GM12878 (cell line): ENCODE measurements at regions of chr4 and their contacts with region 1.

Region 1: GRCh38 chr4:152535903-152536544 is at the start of gene FBXW7:
- DNase-seq: peak; percentile 98
- ATAC-seq: peak; percentile 84
- H3K4me3 ChIP-seq: peak within 1 kb of the TSS; percentile 92
- H3K27ac ChIP-seq: peak within 1 kb of the TSS; percentile 96
- H3K4me1 ChIP-seq: peaks cover 21% of the 10 kb centered on the region
- H3K27me3 ChIP-seq: no peaks in the 10 kb centered on the region
- CTCF ChIP-seq: no peak
- EP300 ChIP-seq: peak in 1 of 2 experiments; percentile 75; a peak in 3 of 4 replicates
- POLR2A ChIP-seq: peak; percentile 90
- RAD21 ChIP-seq: no peak
- polyA plus RNA-seq, gene FBXW7: 40.2 to 42.5 TPM

Region 2: DNA sequence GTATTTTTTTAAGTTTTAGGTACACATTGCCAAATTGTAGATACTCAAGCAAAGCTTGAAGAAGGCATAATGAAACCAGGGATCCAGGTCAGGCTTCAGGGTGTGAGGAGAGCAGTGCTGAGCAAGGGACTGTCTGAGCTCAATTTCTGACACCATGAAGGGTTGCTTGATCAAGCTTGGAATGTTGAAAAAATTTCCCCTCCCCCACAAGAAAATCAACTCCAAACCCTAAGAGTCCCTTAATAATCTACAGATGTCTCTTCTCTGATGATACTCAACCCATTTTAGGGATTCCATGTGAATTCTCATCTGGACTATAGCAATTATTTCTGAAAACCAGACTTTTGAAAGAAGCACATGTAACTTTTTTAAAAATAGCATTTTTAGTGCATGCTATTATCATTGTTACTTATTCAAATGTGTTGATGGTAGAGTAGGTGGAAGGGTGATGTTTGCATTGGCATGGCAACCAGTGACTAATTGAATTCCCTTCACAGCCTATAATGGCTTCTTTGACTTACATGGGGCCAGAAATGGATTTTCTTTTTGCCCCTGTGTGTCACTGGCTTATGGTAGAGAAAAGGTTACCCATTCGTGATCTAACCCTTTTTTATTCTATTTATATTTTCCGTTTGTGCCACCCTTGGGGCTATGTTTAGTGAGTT is 252.1 kb before region 1 on chr4:
- CTCF ChIA-PET with region 1: no interaction called
- POLR2A ChIA-PET with region 1: no interaction called
- RAD21 ChIA-PET with region 1: no interaction called
- SMC1A ChIA-PET with region 1: no interaction called
- in situ Hi-C with region 1: no loop called
- intact Hi-C with region 1: no loop called
- DNase-seq: no peak
- ATAC-seq: no peak
- H3K4me3 ChIP-seq: no peak overlapping the region
- H3K27ac ChIP-seq: no peak overlapping the region
- H3K4me1 ChIP-seq: no peaks in the 10 kb centered on the region
- H3K27me3 ChIP-seq: no peaks in the 10 kb centered on the region
- CTCF ChIP-seq: no peak
- EP300 ChIP-seq: no peak
- POLR2A ChIP-seq: no peak
- RAD21 ChIP-seq: no peak

Region 3: DNA sequence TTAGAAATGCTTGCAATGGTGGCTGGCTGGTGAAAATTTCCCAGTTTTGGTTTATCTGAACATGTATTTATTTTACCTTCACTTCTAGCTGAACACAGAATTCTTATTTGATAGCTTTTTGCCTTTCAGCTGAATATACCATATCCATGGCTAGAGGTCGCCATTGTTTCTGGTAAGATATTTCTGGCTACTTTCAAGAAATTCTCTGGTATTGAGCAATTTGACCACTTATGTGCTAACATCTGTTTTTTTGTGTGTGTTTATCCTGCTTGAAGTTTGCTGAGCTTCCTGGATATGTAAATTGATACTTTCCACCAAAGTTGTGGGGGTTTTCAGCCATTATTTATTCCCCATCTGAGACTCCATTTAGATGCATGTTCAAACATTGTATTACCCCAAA is 75.5 kb before region 1 on chr4:
- CTCF ChIA-PET with region 1: interaction called, 13 read pairs
- POLR2A ChIA-PET with region 1: interaction called, 7 read pairs
- RAD21 ChIA-PET with region 1: interaction called, 5 read pairs
- SMC1A ChIA-PET with region 1: interaction called, 17 read pairs
- in situ Hi-C with region 1: no loop called
- intact Hi-C with region 1: loop called (anchors 5 kb)
- DNase-seq: peak; percentile 43
- ATAC-seq: peak; percentile 32
- H3K4me3 ChIP-seq: no peak overlapping the region
- H3K27ac ChIP-seq: peak overlapping the region; percentile 73
- H3K4me1 ChIP-seq: peaks cover 54% of the 10 kb centered on the region
- H3K27me3 ChIP-seq: no peaks in the 10 kb centered on the region
- CTCF ChIP-seq: peak; percentile 9 to 57 (median 38); a peak in 4 of 6 replicates
- EP300 ChIP-seq: no peak
- POLR2A ChIP-seq: no peak
- RAD21 ChIP-seq: peak; percentile 68

Region 4: GRCh38 chr4:152525873-152526272 is 10.2 kb before region 1 on chr4:
- CTCF ChIA-PET with region 1: interaction called, 24 read pairs
- POLR2A ChIA-PET with region 1: interaction called, 37 read pairs
- RAD21 ChIA-PET with region 1: interaction called, 22 read pairs
- SMC1A ChIA-PET with region 1: interaction called, 55 read pairs
- in situ Hi-C with region 1: no loop called
- intact Hi-C with region 1: no loop called
- DNase-seq: no peak
- ATAC-seq: peak; percentile 55
- H3K4me3 ChIP-seq: peak overlapping the region; percentile 46; the same call in 1 of the 2 replicates
- H3K27ac ChIP-seq: peak overlapping the region; percentile 55
- H3K4me1 ChIP-seq: peaks cover 53% of the 10 kb centered on the region
- H3K27me3 ChIP-seq: no peaks in the 10 kb centered on the region
- CTCF ChIP-seq: no peak
- EP300 ChIP-seq: no peak
- POLR2A ChIP-seq: no peak
- RAD21 ChIP-seq: no peak

Region 5: DNA sequence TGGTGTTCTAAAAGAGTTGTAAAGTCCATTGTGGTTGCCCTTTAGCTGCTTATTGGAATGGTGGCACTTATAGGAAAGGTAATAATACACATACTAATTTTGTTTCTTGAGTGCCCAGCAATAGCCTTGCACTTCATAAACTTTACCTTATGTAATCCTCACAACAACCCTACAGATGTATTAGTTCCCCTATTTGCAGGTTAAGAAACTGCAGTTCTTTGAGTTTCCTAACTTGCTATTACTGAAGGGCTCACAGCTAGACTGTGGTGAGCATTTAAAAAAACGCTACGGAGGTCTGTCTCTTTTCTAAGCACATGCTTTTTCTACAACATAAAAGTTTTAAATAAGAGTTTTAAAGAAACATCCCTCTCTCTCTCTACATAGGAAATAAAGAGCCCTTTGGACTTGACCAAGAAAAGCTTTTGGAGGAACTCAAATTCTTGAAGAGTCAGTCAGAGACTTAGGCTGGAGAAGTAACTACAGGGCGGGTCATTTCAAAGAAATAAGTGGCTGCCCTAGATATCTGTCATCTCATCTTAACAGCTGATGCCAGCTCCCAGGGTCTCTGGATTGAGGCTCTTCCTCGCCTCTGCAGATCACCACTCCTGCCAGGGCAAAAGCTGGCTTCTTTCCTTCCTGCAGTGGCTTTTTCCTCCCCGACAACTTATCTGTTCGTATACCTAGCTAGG is 41.8 kb after region 1 on chr4:
- CTCF ChIA-PET with region 1: interaction called, 4 read pairs
- POLR2A ChIA-PET with region 1: interaction called, 5 read pairs
- RAD21 ChIA-PET with region 1: interaction called, 5 read pairs
- SMC1A ChIA-PET with region 1: interaction called, 30 read pairs
- in situ Hi-C with region 1: no loop called
- intact Hi-C with region 1: no loop called
- DNase-seq: no peak
- ATAC-seq: peak; percentile 94
- H3K4me3 ChIP-seq: no peak overlapping the region
- H3K27ac ChIP-seq: no peak overlapping the region
- H3K4me1 ChIP-seq: no peaks in the 10 kb centered on the region
- H3K27me3 ChIP-seq: no peaks in the 10 kb centered on the region
- CTCF ChIP-seq: 0 out of 6 replicates have a peak, but pooled peaks of 1 of the 3 experiments have one; percentile 5
- EP300 ChIP-seq: no peak
- POLR2A ChIP-seq: no peak
- RAD21 ChIP-seq: no peak

Region 6: GRCh38 chr4:152634110-152634760 is 98.2 kb after region 1 on chr4:
- CTCF ChIA-PET with region 1: interaction called, 71 read pairs
- POLR2A ChIA-PET with region 1: interaction called, 18 read pairs
- RAD21 ChIA-PET with region 1: interaction called, 123 read pairs
- SMC1A ChIA-PET with region 1: interaction called, 228 read pairs
- in situ Hi-C with region 1: no loop called
- intact Hi-C with region 1: loop called (anchors 1 kb)
- DNase-seq: no peak
- ATAC-seq: no peak
- H3K4me3 ChIP-seq: no peak overlapping the region
- H3K27ac ChIP-seq: no peak overlapping the region
- H3K4me1 ChIP-seq: peaks cover 25% of the 10 kb centered on the region
- H3K27me3 ChIP-seq: no peaks in the 10 kb centered on the region
- CTCF ChIP-seq: no peak
- EP300 ChIP-seq: no peak
- POLR2A ChIP-seq: no peak
- RAD21 ChIP-seq: no peak

Region 7: GRCh38 chr4:152795891-152796290 is 259.9 kb after region 1 on chr4:
- CTCF ChIA-PET with region 1: no interaction called
- POLR2A ChIA-PET with region 1: no interaction called
- RAD21 ChIA-PET with region 1: no interaction called
- SMC1A ChIA-PET with region 1: no interaction called
- in situ Hi-C with region 1: no loop called
- intact Hi-C with region 1: no loop called
- DNase-seq: no peak
- ATAC-seq: no peak
- H3K4me3 ChIP-seq: no peak overlapping the region
- H3K27ac ChIP-seq: no peak overlapping the region
- H3K4me1 ChIP-seq: no peaks in the 10 kb centered on the region
- H3K27me3 ChIP-seq: no peaks in the 10 kb centered on the region
- CTCF ChIP-seq: no peak
- EP300 ChIP-seq: no peak
- POLR2A ChIP-seq: no peak
- RAD21 ChIP-seq: no peak